Right ventricle myocardium inferior (tissue), 1 donor: ENCODE measurements at regions of chr14 and their contacts with region 1.

Region 1: GRCh38 chr14:50335389-50335788 is 23.3 kb downstream of the DMAC2L start:
- DNase-seq: no peak
- ATAC-seq: peak; percentile 42

Region 2: GRCh38 chr14:50396631-50397390 is 61.4 kb after region 1 on chr14 and contains the start of gene CDKL1:
- intact Hi-C with region 1: loop called (anchors 5 kb)
- DNase-seq: peak; percentile 86
- ATAC-seq: peak; percentile 93
- total RNA-seq, gene CDKL1: 3.3 TPM

Region 3: DNA sequence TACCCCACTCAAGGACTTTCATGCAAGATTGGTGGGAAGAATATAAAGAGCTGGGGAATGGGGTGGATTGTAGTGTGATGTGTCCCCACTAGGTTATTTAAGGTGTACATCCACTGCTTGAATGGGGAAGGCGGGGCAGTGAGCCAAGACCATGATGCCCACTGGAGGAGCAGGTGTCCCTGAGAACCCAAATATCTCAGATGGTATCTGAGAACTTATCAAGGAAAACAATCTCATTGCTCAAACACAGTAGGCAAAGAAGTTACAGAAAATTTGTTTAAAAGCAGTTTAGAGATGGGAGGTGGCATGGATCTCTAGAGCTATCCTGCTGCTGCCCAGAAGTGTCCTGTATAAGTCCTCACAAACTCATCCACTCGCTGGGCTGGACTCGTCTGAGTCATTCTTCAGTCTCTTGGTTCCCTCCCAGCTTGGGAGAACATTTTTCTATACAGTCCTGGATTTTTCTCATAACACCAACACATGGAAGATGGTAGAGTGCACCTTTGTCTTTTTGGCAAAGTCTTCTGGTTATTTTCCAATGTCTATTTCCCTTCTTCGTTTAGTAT is 219.1 kb after region 1 on chr14:
- intact Hi-C with region 1: no loop called
- DNase-seq: no peak
- ATAC-seq: no peak